Activated T-helper 1 cell treated with anti-CD3 and anti-CD28 coated beads, Interleukin-12 subunit alpha, Interleukin-12 subunit beta, Interleukin-2, Interleukin-4 antibody, amounts not matched to agents 30 ng/mL and 10 ng/mL and 1 ng/mL, durations not matched to agents 14 hours and 24 hours and 36 hours (primary cell): ENCODE measurements at regions of chr15 and their contacts with region 1.

Region 1: GRCh38 chr15:31344823-31345605 is 18.4 kb downstream of the KLF13 start:
- DNase-seq: no peak
- H3K4me3 Mint-ChIP-seq: peak overlapping the region; percentile 89
- H3K27ac Mint-ChIP-seq: peak overlapping the region; percentile 99
- H3K4me1 Mint-ChIP-seq: peaks cover 94% of the 10 kb centered on the region
- H3K27me3 Mint-ChIP-seq: no peaks in the 10 kb centered on the region

Region 2: DNA sequence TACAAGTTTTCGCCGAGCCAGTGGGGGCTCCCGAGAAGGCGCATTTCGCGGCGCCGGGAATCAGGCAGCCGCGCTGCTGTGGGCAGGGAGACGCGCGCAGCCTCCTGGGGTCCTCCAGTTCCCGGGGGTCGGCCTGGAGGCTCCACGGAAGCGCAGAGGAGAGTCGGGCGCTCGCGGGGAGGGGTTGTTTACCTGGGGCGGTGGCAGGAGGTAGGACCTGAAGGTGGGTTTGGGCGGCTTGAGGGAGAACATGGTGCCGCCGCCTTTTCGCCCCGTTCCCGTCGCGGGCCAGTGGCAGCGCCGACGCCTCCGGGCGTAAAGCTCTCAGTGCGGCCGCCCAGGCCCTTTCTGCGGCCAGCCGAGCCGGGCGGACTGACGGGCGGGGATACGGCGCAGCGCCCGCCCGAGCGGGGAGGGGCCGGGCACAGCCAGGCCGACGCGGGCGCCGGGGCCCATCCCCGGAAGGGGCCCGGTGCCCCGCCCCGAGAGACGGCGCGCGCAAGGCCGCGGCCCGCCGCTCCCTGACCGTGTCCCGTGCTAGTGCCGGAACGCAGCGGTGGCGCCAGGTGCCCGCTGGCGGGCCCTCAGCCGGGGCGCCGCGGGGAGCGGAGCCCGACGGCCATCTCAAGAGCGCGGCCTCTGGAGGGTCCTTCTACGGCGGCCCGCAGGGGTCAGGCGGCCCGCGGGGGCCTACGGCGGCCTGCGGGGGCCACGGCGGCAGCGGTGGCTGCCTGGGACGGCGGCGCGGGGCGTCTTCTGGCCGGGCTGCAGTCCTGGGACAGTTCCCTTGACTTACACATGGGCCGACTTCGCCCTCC is 353.6 kb before region 1 on chr15 and contains the start of gene MTMR10:
- intact Hi-C with region 1: loop called (anchors 5 kb)
- DNase-seq: peak; percentile 75
- H3K4me3 Mint-ChIP-seq: peak within 1 kb of the TSS; percentile 93
- H3K27ac Mint-ChIP-seq: peak within 1 kb of the TSS; percentile 85
- H3K4me1 Mint-ChIP-seq: peaks cover 26% of the 10 kb centered on the region
- H3K27me3 Mint-ChIP-seq: peaks cover 4% of the 10 kb centered on the region
- total RNA-seq, gene MTMR10: 11.8 and 13.4 TPM in 2 replicates

Region 3: GRCh38 chr15:31320022-31320421 is 25.0 kb before region 1 on chr15:
- intact Hi-C with region 1: no loop called
- DNase-seq: no peak
- H3K4me3 Mint-ChIP-seq: no peak overlapping the region
- H3K27ac Mint-ChIP-seq: no peak overlapping the region
- H3K4me1 Mint-ChIP-seq: peaks cover 72% of the 10 kb centered on the region
- H3K27me3 Mint-ChIP-seq: no peaks in the 10 kb centered on the region

Region 4: DNA sequence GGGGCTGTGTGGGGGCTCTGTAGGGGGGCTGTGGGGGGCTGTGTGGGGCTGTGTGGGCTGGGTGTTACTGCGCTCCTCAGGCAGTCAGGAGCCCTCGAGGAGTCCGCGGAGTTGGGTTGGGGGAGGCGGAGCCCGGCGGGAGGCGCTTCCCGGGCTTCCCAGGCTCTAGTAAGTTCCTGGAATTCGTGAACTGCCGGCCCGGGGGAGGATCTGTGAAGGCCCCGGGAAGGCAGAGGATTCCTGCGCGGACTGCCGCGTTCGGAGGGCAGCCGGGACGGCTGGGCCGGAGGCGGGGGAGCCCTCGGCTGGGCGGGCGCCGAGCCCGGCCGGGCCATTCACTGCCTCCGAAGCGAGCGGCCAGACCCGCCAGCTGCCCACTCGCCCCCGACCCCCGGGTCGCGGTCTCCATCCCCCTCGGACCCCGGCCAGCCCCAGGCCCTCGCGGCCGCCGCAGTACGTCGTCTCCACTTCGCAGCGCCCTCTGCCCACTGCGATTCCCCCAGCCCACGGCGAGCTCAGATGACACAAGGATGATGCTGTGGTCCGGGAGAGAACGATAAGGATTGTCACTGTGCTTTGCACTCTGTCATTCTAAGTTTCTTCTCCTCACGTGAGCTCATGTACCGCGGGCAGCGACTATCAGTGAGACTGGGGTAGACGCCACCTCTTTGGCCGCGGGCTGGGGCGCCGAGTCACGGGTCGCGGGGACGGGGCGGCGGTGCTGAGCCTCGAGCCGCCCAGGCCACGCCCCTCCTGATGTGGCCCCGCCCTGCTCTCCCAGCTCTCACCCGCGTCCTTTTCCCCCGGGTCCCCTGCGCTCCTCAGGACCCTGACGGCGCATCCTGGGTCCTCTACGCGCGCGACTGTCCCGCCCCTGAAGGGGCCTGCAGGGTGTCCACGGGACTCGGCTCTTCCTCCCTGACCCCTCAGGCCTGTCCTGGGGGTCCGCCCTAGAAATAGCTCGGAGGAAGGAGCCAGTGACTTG is 47.0 kb after region 1 on chr15:
- intact Hi-C with region 1: loop called (anchors 2 kb)
- DNase-seq: peak; percentile 78
- H3K4me3 Mint-ChIP-seq: peak overlapping the region; percentile 86
- H3K27ac Mint-ChIP-seq: peak overlapping the region; percentile 90
- H3K4me1 Mint-ChIP-seq: peaks cover 37% of the 10 kb centered on the region
- H3K27me3 Mint-ChIP-seq: no peaks in the 10 kb centered on the region

Region 5: DNA sequence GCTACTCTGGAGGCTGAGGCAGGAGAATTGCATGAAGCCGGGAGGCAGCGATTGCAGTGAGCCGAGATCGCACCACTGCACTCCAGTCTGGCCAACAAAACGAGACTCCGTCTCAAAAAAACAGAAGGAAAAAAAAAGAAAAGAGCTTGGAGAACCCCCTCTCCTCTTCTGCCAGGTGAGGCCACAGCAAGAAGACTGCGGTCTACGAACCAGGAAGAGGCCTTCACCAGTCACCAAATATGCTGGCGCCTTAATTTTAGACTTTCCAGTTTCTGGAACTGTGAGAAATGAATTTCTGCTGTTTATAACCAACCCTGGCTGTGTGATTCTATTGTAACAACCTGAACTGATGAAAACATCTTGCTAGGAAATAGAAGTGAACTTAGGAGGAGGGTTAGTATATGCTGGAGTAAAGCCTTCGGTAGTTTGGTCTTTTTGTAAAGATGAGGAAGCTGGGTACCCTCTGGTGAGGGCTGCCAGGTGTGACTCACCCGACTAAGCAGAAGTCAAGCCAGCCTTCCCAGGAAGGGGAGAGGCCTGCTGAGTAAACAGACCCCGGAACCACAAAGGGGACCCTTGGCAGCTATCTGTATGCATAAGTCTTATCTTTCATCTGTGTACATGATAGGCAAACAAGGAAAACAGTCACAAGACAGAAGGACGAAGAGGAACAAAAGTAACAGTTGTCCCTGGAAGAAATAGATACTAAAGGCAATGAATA is 60.3 kb after region 1 on chr15:
- intact Hi-C with region 1: no loop called
- DNase-seq: no peak
- H3K4me3 Mint-ChIP-seq: no peak overlapping the region
- H3K27ac Mint-ChIP-seq: peak overlapping the region; percentile 59
- H3K4me1 Mint-ChIP-seq: peaks cover 27% of the 10 kb centered on the region
- H3K27me3 Mint-ChIP-seq: peaks cover 4% of the 10 kb centered on the region

Region 6: GRCh38 chr15:31472636-31473384 is 127.8 kb after region 1 on chr15:
- intact Hi-C with region 1: no loop called
- DNase-seq: peak; percentile 68
- H3K4me3 Mint-ChIP-seq: peak overlapping the region; percentile 76
- H3K27ac Mint-ChIP-seq: peak overlapping the region; percentile 90
- H3K4me1 Mint-ChIP-seq: peaks cover 59% of the 10 kb centered on the region
- H3K27me3 Mint-ChIP-seq: no peaks in the 10 kb centered on the region